Prostate gland (tissue), 2 donors: ENCODE measurements at regions of chr5 and their contacts with region 1.

Region 1: DNA sequence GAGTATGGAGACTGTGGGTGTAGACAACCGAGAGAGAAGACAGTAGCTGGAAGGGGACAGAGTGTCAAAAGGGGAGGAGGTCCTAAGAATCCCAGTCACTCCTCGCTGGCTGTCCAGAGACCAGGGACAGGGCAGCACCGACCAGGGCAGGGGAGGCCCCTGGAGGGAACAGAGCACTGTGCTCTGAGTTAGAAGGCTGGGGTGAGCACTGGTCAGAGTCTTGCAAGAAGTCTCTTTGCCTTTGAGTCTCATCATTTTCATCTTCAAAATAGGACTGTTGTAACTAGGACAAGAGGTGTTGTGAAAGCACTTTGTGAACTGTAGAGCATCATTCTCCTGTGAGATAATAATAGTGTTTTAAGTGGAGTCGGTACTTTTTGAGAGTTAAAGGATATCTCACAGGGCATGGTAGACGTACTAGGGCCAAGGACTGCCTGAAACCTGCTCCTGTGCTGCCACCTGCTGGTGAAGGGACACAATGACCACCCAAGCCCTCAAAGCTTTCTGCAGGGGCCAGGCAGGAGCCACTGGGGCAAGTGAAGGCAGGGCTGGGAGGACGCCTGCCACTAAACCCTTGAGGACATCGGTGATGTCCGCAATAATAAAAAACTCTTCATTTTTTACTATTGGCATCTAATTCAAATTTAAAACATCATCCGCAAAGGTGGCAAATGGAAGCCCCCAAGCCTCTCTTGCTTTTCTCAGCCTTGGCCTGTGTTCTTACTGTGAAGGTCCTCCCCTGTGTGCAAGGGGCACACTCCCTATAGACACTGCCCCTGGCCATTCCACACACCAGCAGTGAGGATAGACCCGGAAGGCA is 28.2 kb downstream of the SLC6A7 start:
- DNase-seq: peak; percentile 82
- H3K4me3 ChIP-seq: no peak overlapping the region
- H3K27ac ChIP-seq: no peak overlapping the region
- H3K4me1 ChIP-seq: no peaks in the 10 kb centered on the region
- H3K27me3 ChIP-seq: no peaks in the 10 kb centered on the region
- CTCF ChIP-seq: peak; percentile 80 to 95 (median 91)
- POLR2A ChIP-seq: no peak

Region 2: DNA sequence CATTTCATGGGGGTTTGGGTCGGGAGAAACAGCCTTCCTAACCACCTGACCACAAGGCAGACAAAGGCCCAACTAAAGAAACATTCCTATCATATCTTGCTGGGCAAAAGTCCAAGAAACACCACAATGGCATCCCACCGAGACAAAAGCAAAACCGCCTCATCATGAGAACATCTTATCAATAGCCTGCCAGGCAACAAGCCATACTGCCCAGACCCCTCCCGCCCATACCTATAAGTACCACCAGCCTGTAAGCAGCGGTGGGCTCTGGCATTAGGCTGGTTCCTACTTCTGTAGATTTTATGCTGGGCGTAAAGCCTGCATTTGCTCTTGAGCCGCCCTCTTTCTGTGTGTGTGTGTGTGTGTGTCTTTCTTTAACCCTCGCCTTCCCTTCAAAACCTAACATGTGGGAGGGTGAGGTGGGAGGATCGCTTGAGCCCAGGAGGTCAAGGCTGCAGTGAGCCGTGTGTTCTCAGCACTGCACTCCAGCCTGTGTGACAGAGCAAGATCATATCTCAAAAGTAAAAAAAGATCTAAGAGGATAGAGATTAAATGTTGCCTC is 330.4 kb before region 1 on chr5:
- intact Hi-C with region 1: no loop called
- DNase-seq: no peak
- H3K4me3 ChIP-seq: no peak overlapping the region
- H3K27ac ChIP-seq: no peak overlapping the region
- H3K4me1 ChIP-seq: no peaks in the 10 kb centered on the region
- H3K27me3 ChIP-seq: no peaks in the 10 kb centered on the region
- CTCF ChIP-seq: no peak
- POLR2A ChIP-seq: no peak

Region 3: DNA sequence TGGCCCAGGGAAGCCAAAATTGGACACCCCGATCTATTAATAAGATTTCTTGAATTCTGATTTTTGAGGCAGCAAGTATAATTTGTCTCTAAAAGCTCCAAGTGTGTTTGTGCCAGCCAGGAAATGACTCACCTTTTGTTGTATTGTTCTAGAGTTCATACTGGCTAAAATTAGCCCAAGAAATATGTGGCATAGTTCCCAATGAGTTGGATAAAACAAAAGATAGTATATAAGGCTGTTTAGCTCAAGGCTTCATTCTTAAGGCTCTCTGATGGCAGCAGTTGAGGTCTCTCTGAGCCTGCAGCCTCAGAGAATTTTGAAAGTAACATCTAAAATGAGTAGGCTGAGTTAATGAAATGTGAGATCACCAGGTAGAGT is 195.9 kb before region 1 on chr5:
- intact Hi-C with region 1: loop called (anchors 10 kb)
- DNase-seq: peak; percentile 21
- H3K4me3 ChIP-seq: no peak overlapping the region
- H3K27ac ChIP-seq: peak overlapping the region; percentile 40 to 55
- H3K4me1 ChIP-seq: peaks cover 3% of the 10 kb centered on the region
- H3K27me3 ChIP-seq: no peaks in the 10 kb centered on the region
- CTCF ChIP-seq: no peak
- POLR2A ChIP-seq: no peak

Region 4: GRCh38 chr5:150129813-150130492 is 88.1 kb before region 1 on chr5:
- intact Hi-C with region 1: loop called (anchors 1 kb)
- DNase-seq: peak; percentile 47
- H3K4me3 ChIP-seq: no peak overlapping the region
- H3K27ac ChIP-seq: no peak overlapping the region
- H3K4me1 ChIP-seq: no peaks in the 10 kb centered on the region
- H3K27me3 ChIP-seq: no peaks in the 10 kb centered on the region
- CTCF ChIP-seq: peak; percentile 76 to 91 (median 90)
- POLR2A ChIP-seq: no peak

Region 5: DNA sequence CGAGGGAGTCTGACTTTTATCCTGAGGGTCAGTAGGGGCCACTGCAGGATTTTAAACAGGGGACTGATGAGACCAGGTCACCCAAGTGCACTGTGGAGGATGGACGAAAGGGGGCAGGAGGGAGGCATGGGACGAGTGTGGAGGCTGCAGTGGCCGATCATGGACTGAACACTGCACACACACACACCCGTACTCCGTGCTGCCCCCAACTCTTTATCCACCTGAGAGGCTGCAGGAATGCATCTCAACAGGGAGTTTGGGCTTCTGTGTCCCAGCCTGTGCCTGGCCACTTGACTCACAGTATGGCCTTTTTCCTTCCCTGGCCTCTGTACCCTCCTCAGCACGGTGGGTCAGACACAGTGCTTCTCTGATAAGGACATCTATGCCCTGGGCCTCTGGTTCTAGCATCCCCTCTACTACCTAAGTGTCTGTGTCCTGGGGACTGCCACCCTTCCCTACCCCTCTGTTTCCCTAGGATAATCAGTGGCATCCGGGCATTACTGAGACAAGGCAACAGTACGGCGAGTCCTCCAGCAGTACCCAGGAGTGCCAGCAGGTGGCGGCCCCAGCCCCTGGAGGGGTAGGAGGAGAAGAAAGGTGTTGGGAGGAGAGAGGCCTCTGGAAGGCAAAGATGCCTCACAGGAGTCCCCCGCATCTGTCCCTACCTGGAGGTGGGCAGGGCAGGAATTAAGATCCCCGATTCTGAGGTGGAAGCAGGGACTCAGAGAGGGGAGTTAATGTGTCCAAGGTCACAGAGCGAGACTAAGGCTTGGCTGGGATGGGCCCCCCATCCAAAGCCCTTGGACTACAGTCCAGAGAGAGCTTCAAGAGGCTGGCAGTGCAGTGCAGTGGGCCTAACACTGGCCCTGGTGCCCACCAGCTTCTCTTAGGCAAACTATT is 56.6 kb before region 1 on chr5:
- intact Hi-C with region 1: loop called (anchors 1 kb)
- DNase-seq: peak; percentile 52
- H3K4me3 ChIP-seq: no peak overlapping the region
- H3K27ac ChIP-seq: peak overlapping the region in 1 of 2 donors; percentile 42
- H3K4me1 ChIP-seq: peaks cover 3% of the 10 kb centered on the region
- H3K27me3 ChIP-seq: no peaks in the 10 kb centered on the region
- CTCF ChIP-seq: peak; percentile 55 to 91 (median 88)
- POLR2A ChIP-seq: no peak

Region 6: DNA sequence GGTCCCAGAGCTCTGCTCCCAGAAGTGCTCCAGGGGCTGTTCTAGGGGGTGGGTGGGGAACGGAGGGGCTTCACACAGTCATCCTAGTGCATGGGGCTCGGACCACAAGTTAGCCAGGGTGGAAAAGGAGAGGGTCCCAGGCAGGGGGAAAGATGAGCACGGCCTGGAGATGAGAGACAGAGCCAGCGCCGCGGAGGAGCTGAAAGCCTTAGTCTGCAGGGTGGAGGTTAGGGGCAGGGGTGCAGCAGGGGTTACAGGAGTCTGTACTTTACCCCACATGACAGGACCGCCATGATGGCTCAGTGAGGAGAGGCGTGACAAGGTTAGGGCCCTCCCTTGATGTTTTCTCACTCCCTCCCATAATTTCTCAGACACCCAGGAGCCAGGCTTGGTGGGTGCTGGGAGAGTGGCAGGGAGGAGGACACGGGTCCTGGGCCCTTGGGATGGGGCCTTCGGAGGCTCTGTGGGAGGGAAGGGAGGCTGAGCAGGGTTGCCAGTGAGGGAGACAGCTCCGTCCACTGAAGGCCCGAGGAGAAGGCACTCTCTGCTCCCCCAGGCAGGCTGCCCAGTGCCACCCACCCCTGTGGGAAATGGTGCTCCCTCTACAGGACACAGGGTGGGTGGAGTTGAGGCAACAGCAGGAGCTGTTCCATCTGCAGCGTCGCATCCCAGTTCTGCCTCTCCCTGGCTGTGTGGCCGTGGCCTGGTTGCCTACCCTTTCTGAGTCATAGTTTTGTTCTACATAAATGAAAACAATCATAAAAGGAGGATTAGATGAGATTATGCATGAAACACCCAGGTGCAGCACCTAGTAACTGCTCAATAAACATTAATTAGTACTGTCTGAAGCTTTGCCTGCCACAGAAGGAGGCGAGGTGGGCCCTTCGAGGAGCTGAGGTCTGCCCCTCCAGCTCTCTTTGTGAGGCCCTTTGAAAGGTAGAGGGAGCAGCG is 356.1 kb after region 1 on chr5:
- intact Hi-C with region 1: no loop called
- DNase-seq: no peak
- H3K4me3 ChIP-seq: no peak overlapping the region
- H3K27ac ChIP-seq: no peak overlapping the region
- H3K4me1 ChIP-seq: no peaks in the 10 kb centered on the region
- H3K27me3 ChIP-seq: no peaks in the 10 kb centered on the region
- CTCF ChIP-seq: no peak
- POLR2A ChIP-seq: no peak